B cell (primary cell): ENCODE measurements at regions of chr14 and their contacts with region 1.

Region 1: DNA sequence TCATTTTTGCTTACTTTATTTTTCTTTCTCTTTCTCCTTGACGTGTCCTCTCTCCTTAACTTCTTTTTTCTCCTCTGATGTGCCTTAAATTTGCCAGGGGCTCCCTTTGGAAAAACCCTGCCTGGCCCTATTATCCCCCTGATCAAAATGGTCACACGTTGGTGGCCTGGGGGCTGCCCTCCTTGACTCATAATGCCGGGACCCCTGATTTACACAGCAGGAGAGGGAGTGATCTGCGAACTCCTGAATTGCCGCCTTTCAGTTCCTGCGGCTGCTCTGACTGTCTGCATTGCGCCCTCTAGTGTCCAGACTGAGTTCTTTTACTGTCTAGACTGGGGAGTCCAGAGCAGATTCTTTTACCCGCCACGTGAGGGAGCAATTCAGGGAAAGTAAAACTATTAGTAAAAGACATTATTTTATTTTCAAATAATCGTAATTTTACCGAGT is 44.8 kb upstream of the GZMB start:
- DNase-seq: peak; percentile 91
- ATAC-seq: peak; percentile 96
- H3K4me3 ChIP-seq: peak overlapping the region; percentile 3 to 58 (median 31)
- H3K4me3 Mint-ChIP-seq: peak overlapping the region; percentile 84
- H3K27ac ChIP-seq: peak overlapping the region in 1 of 2 donors; percentile 7
- H3K27ac Mint-ChIP-seq: peak overlapping the region; percentile 76
- H3K4me1 ChIP-seq: peaks cover 32% of the 10 kb centered on the region in 2 donors
- H3K4me1 Mint-ChIP-seq: peaks cover 49% of the 10 kb centered on the region
- H3K27me3 ChIP-seq: no peaks in the 10 kb centered on the region
- H3K27me3 Mint-ChIP-seq: no peaks in the 10 kb centered on the region
- CTCF ChIP-seq: peak; percentile 100

Region 2: DNA sequence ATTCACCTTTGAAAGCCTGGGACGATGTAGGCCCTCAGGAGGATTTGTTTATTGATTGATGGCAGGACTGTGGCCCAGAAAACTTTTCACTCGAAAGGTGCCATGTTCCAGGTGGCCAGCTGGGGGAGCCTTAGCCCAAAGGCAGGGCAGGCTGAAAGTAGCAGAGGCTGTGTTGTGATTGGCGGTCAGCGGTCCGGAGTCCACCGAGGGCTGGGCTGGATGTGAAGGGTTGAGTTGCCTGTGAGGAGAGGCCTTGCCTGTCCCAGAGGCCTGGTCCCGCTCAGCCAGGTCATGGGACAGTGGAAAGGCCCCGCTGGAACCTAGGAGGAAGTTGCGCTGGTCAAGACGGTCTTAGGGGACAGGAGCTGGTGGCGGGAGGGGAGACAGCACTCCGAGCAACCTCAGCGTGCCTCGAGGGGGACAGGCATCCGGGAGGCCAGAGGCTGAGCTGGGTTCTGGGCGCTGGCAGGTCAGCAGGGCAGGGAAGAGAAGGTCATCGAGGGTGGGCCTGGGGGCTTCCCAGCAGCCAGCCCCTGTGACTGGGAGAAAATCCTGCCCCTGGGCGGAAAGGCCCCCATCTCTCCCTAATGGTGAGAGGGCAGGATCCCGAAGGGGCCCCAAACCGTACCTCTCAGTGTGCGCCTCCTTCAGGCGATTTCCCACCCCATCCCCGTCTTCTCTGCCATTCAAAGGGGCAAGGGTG is 197.1 kb before region 1 on chr14:
- CTCF ChIA-PET with region 1: interaction called, 4 read pairs
- POLR2A ChIA-PET with region 1: no interaction called
- intact Hi-C with region 1: loop called (anchors 5 kb)
- DNase-seq: peak; percentile 47
- ATAC-seq: peak; percentile 82
- H3K4me3 ChIP-seq: peak overlapping the region in 2 of 5 experiments; percentile 29 to 32
- H3K4me3 Mint-ChIP-seq: peak overlapping the region; percentile 89
- H3K27ac ChIP-seq: no peak overlapping the region
- H3K27ac Mint-ChIP-seq: peak overlapping the region; percentile 47
- H3K4me1 ChIP-seq: peaks cover 9 to 10% of the 10 kb centered on the region in 2 donors
- H3K4me1 Mint-ChIP-seq: peaks cover 17% of the 10 kb centered on the region
- H3K27me3 ChIP-seq: no peaks in the 10 kb centered on the region
- H3K27me3 Mint-ChIP-seq: peaks cover 3% of the 10 kb centered on the region
- CTCF ChIP-seq: peak; percentile 70

Region 3: DNA sequence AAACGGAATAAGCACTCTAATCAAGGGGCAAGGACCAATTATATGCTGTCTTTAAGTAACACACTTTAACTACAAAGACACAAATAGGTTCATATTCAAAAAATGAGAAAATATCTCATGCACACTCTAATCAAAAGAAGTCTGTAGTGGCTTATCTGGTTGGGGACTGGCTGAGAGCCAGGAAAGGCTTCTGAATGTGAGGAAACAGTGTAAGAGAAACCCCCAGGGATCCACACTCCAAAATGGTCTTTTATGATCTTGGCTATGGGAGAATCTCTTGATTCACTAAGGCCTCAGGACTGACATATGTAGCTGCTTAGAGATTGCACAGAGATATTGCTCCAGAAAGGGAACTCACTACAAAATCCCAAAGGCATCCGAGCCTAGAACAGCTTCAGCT is 113.1 kb before region 1 on chr14:
- CTCF ChIA-PET with region 1: no interaction called
- POLR2A ChIA-PET with region 1: no interaction called
- intact Hi-C with region 1: no loop called
- DNase-seq: no peak
- ATAC-seq: no peak
- H3K4me3 ChIP-seq: no peak overlapping the region
- H3K4me3 Mint-ChIP-seq: no peak overlapping the region
- H3K27ac ChIP-seq: no peak overlapping the region
- H3K27ac Mint-ChIP-seq: no peak overlapping the region
- H3K4me1 ChIP-seq: no peaks in the 10 kb centered on the region
- H3K4me1 Mint-ChIP-seq: no peaks in the 10 kb centered on the region
- H3K27me3 ChIP-seq: peaks cover 0 to 3% (median 0%) of the 10 kb centered on the region in 4 experiments
- H3K27me3 Mint-ChIP-seq: peaks cover 26% of the 10 kb centered on the region
- CTCF ChIP-seq: no peak

Region 4: DNA sequence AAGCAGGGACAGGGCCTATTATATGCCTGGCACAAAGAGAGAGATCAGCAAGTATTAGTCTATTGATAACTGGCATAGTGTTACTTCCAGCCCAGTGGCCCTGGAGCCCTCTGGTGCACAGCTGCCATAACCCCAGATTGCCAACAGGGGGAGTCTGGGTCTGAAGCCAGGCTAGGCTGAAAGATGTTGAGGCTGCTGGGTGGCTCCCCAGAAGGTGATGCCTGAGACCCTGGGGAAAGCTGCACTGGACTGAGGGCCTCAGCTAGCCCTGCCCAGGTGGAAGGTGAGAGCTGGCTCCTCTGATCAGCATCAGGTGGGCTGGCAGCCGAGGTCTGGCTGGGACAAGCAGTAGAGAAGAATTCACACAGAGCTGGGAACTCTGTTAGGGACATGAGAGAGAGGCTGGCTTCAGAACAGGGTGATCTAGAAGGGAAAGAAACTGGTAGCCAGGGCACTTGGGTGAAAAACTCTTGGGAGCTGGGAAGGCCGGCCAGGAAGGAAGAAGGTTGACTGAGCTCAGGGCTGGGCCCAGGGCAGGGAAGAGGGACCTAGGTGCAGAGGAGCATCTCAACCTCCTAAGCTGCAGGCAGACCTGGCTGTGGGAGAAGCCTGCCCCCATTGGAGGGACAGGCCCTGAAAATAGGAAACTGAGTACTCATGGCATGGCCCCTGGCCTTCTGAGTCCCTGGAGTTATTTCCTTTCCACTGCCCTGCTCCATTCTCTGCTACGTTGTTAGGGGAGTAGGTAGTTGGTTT is 73.2 kb before region 1 on chr14:
- CTCF ChIA-PET with region 1: interaction called, 74 read pairs
- POLR2A ChIA-PET with region 1: no interaction called
- intact Hi-C with region 1: loop called (anchors 1 kb)
- DNase-seq: peak; percentile 73
- ATAC-seq: peak; percentile 93
- H3K4me3 ChIP-seq: no peak overlapping the region
- H3K4me3 Mint-ChIP-seq: no peak overlapping the region
- H3K27ac ChIP-seq: no peak overlapping the region
- H3K27ac Mint-ChIP-seq: peak overlapping the region; percentile 57
- H3K4me1 ChIP-seq: peaks cover 25 to 27% of the 10 kb centered on the region in 2 donors
- H3K4me1 Mint-ChIP-seq: peaks cover 36% of the 10 kb centered on the region
- H3K27me3 ChIP-seq: no peaks in the 10 kb centered on the region
- H3K27me3 Mint-ChIP-seq: peaks cover 13% of the 10 kb centered on the region
- CTCF ChIP-seq: peak; percentile 92

Region 5: DNA sequence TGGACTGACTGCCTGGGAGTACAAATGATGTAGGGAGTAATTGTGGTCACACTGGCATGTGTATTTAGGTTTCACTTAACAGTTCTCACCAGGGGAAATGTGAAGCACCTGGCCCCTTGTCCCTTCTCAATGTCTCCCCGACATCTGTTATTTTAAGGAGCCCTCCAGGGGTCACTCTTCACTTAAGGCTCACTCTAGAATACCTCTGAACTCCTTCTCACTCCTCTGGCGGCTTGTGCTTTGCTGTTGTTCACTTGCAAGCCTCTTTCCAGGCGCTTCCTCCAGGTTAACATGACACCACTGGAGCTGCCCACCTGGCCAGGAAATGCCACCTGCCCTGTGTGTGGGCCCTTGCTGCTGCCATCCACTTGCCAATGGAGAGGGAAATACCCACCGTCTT is 11.7 kb after region 1 on chr14:
- CTCF ChIA-PET with region 1: interaction called, 21 read pairs
- POLR2A ChIA-PET with region 1: no interaction called
- intact Hi-C with region 1: no loop called
- DNase-seq: peak; percentile 39
- ATAC-seq: peak; percentile 39
- H3K4me3 ChIP-seq: no peak overlapping the region
- H3K4me3 Mint-ChIP-seq: no peak overlapping the region
- H3K27ac ChIP-seq: no peak overlapping the region
- H3K27ac Mint-ChIP-seq: no peak overlapping the region
- H3K4me1 ChIP-seq: peaks cover 10% of the 10 kb centered on the region in 2 donors
- H3K4me1 Mint-ChIP-seq: peaks cover 5% of the 10 kb centered on the region
- H3K27me3 ChIP-seq: no peaks in the 10 kb centered on the region
- H3K27me3 Mint-ChIP-seq: peaks cover 8% of the 10 kb centered on the region
- CTCF ChIP-seq: peak; percentile 22

Region 6: DNA sequence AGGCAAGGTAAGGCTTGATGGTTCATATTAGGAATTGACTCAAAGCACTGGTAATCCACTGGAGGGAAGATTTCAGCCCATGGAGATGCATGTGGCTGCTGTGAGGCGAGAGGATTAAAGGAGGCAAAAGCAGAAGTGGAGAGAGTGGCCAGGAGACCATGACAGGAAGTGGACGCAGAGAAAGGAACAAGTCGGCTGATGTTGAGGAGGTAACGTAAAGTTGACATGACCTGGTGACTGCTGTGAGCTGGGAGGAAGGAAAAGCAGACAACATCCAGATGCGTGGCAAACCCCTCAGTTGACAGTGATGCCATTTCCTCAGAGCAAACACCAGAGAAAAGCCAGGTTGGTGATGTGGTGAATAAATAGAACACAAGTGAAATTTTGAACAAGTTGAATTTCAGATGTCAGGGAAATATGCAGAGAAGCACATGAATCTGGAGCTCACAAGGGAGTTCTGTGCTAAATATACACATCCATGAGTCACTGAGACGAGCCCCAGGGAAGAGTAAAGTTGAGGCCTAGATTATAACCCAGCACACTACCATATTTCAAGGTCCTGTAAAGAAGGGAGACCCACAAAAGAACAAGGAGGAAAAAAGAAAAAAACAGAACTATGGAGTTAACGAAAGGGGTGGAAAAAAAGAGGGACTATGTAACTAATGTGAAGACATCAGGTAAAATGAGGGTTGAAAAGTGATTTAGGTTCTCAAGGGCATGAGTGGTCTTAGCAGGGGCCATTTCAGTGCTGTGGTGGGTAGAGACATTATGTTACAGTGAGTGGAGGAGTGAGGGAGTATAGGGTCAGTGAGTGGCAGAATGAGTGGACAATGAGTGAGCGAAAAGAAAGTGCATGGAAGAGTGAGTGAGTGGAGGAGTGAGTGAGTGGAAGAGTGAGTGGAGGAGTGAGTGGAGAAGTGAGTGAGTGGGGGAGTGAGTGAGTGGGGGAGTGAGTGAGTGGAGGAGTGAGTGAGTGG is 16.7 kb after region 1 on chr14:
- CTCF ChIA-PET with region 1: interaction called, 21 read pairs
- POLR2A ChIA-PET with region 1: no interaction called
- intact Hi-C with region 1: no loop called
- DNase-seq: peak; percentile 79
- ATAC-seq: peak; percentile 62
- H3K4me3 ChIP-seq: peak overlapping the region in 1 of 5 experiments; percentile 1
- H3K4me3 Mint-ChIP-seq: no peak overlapping the region
- H3K27ac ChIP-seq: peak overlapping the region; percentile 32 to 70
- H3K27ac Mint-ChIP-seq: no peak overlapping the region
- H3K4me1 ChIP-seq: peaks cover 53 to 55% of the 10 kb centered on the region in 2 donors
- H3K4me1 Mint-ChIP-seq: peaks cover 31% of the 10 kb centered on the region
- H3K27me3 ChIP-seq: no peaks in the 10 kb centered on the region
- H3K27me3 Mint-ChIP-seq: no peaks in the 10 kb centered on the region
- CTCF ChIP-seq: no peak